HCT116 (cell line): ENCODE measurements at regions of chr16 and their contacts with region 1.

Region 1: DNA sequence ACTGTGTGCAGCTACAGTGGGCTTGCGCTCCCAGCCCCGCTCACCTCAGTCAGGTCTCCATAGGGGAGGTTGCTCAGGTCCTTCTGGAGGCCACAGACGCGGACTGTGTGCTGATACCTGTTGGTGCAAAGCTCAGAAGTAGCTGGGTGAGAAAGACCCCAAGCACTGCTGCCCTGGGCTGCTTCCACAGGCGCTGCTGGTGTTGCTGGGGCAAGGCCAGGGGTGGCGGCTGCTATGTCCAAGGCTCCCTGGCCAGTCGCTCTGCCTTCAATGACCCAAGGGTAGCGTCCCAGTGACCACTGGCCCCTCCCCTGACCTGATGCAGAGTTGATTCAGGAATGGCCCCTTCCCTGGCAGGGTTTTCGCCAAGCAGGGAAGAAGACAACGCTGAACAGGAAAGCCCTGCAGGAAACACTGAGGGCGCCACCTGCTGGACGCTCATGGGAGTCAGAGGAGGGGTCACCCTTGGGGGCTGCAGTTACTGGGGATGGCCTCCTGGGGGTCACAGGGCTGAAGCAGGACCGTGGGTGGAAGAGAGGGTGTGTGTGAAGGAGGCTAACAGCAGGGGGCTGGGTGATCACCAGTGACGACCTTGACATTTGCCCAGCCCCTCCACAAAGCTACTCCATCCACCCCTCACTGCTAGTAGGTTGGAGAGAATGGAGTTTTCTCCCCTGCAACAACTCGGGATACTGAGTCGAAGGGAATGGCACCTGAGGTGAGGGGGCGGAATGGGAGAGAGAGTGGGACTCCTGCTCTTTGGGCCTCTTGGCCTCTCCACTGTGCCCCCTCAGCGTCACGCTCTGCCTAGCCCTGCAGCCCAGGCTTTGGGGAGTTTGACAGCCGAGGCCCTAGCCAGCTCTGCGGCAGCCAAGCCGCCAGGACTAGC is 38.3 kb downstream of the ABCC12 start:
- DNase-seq: peak; percentile 56
- ATAC-seq: peak; percentile 98
- H3K4me3 ChIP-seq: no peak overlapping the region
- H3K27ac ChIP-seq: no peak overlapping the region
- H3K4me1 ChIP-seq: peaks cover 0 to 9% of the 10 kb centered on the region in 2 experiments; a peak in 2 of 4 replicates
- H3K27me3 ChIP-seq: 0 out of 2 replicates have a peak, but pooled peaks cover 5% of the 10 kb centered on the region
- CTCF ChIP-seq: peak; percentile 90 to 99 (median 98)
- POLR2A ChIP-seq: no peak
- RAD21 ChIP-seq: peak; percentile 66

Region 2: DNA sequence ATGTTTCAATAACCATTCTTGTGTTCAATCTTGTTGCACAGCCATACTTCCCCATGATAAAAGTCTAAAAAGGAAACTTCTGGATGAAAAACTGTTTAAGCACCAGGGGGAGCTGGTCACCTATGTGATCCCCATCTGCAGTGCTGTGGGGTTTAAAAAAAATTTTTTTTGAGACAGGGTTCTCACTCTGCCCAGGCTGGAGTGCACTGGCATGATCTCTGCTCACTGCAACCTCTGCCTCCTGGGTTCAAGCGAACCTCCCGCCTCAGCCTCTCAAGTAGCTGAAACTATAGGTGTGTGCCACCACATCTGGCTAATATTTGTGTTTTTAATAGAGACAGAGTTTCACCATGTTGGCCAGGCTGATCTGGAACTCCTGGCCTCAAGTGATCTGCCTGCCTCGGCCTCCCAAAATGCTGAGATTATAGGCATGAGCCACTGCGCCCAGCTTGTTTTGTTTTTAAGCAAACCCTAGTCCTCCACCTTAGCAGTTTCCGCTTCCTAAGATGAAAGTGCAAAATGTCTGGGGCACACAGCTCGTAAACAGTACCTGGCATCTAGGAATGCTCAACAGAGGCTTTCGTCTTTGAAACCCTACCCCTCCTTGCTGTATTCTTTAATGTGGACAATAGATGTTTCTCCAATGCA is 1169.4 kb before region 1 on chr16:
- CTCF ChIA-PET with region 1: no interaction called
- POLR2A ChIA-PET with region 1: no interaction called
- RAD21 ChIA-PET with region 1: no interaction called
- intact Hi-C with region 1: loop called (anchors 5 kb)
- DNase-seq: peak; percentile 29
- ATAC-seq: peak; percentile 90
- H3K4me3 ChIP-seq: no peak overlapping the region
- H3K27ac ChIP-seq: no peak overlapping the region
- H3K4me1 ChIP-seq: no peaks in the 10 kb centered on the region
- H3K27me3 ChIP-seq: no peaks in the 10 kb centered on the region
- CTCF ChIP-seq: peak; percentile 63 to 75 (median 65)
- POLR2A ChIP-seq: no peak
- RAD21 ChIP-seq: peak; percentile 89

Region 3: DNA sequence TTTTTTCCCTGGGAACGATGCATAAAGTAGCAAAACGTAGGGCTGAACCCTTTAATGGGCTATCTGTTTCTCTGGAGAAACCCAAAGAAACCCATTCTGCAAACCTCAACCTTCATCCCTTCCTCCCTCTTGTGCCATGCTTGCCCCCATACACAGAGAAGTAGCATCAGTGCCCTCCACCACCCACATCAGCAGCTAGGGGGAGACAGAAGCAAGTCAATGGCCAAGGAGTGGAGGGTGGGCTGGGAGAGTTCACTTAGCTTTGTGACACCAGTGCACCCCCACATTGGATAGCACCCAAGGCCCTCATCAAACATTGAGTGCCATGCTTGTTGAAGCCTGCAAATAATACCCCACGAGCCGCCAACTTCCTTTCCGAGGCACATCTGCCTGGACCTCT is 244.0 kb before region 1 on chr16:
- CTCF ChIA-PET with region 1: interaction called, 4 read pairs
- POLR2A ChIA-PET with region 1: no interaction called
- RAD21 ChIA-PET with region 1: no interaction called
- intact Hi-C with region 1: loop called (anchors 2 kb)
- DNase-seq: no peak
- ATAC-seq: peak; percentile 70; the same call in 1 of the 2 replicates
- H3K4me3 ChIP-seq: no peak overlapping the region
- H3K27ac ChIP-seq: no peak overlapping the region
- H3K4me1 ChIP-seq: no peaks in the 10 kb centered on the region
- H3K27me3 ChIP-seq: peaks cover 19% of the 10 kb centered on the region; the same call in 1 of the 2 replicates
- CTCF ChIP-seq: peak; percentile 26 to 70 (median 61); a peak in 5 of 6 replicates
- POLR2A ChIP-seq: no peak
- RAD21 ChIP-seq: peak; percentile 53

Region 4: DNA sequence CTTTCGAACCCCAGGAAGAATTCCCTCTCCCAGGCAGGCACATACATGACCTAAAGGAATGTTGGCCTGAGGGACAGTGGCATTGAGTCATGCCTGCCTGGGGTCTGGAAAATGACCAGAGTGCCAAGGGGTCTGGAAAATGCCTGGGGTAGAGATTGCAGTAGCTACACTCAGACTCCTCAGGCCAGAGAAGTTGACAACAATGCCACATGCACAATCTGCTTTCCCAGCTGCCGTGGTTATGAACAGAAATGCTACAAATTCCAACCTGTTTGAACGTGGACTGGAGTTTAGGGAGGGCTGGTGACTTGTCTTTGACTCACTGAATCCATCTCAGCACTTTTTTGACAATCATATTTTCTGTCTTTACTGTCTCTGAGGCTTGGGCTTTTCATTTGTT is 211.7 kb before region 1 on chr16:
- CTCF ChIA-PET with region 1: no interaction called
- POLR2A ChIA-PET with region 1: no interaction called
- RAD21 ChIA-PET with region 1: no interaction called
- intact Hi-C with region 1: no loop called
- DNase-seq: no peak
- ATAC-seq: no peak
- H3K4me3 ChIP-seq: no peak overlapping the region
- H3K27ac ChIP-seq: no peak overlapping the region
- H3K4me1 ChIP-seq: no peaks in the 10 kb centered on the region; a peak in 1 of 4 replicates
- H3K27me3 ChIP-seq: peaks cover 12% of the 10 kb centered on the region
- CTCF ChIP-seq: no peak
- POLR2A ChIP-seq: no peak
- RAD21 ChIP-seq: no peak